ENCODE measurements at regions of chr3 and their contacts with region 1.

Region 1: GRCh38 chr3:194129581-194130133 is 6.3 kb upstream of the HES1 start:
- DNase-seq: peak in 1 of 5 donors; percentile 17
- ATAC-seq: no peak
- H3K4me3 ChIP-seq: no peak overlapping the region
- H3K27ac ChIP-seq: no peak overlapping the region
- H3K4me1 ChIP-seq: peaks cover 0 to 43% (median 27%) of the 10 kb centered on the region in 12 donors
- H3K27me3 ChIP-seq: peaks cover 0 to 45% (median 0%) of the 10 kb centered on the region in 9 donors
- CTCF ChIP-seq: no peak
- POLR2A ChIP-seq: no peak

Region 2: GRCh38 chr3:192980632-192981031 is 1149.0 kb before region 1 on chr3:
- intact Hi-C with region 1: no loop called
- DNase-seq: no peak
- ATAC-seq: no peak
- H3K4me3 ChIP-seq: no peak overlapping the region
- H3K27ac ChIP-seq: no peak overlapping the region
- H3K4me1 ChIP-seq: no peaks in the 10 kb centered on the region
- H3K27me3 ChIP-seq: peaks cover 0 to 3% (median 0%) of the 10 kb centered on the region in 9 donors
- CTCF ChIP-seq: no peak
- POLR2A ChIP-seq: no peak

Region 3: DNA sequence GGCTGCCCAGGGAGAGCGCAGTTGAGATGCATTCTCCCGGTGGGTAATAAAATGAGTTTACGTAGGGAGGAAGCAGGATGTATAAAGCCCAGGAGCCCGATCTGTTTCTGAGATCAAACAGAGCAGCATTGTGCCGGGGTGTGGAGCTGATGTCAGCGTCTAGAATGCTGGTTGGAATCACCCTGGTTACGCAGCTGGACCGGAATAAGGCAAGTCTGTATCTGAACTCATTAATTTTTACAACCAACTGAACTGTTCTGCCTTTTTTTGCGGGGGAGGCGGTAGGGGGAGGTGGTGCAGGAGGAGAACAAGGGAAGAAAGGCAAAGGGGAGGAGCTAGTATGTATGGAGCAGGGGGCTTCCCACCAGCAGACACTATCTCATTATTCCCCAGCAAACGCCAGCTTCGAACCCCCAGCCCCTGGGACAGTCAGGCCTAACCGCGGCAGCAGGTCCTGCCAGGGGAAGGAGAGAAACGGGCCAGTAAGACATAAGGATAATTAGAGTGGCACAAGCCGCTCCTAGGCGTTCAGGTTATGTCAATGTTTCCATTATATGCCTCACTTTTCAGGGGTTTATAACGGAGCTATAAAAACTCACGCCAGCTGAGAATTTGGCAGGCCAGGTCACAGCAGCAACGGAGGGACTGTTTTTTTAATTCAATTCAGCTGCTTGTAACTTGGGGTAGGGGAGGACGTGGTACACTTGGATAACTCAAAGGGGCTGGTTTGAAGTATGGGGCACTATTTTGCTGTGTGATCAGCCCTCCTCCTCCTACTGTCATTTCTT is 169.0 kb before region 1 on chr3:
- intact Hi-C with region 1: loop called in 1 of 10 experiments (anchors 10 kb)
- DNase-seq: peak in 2 of 5 donors; percentile 47 to 65
- ATAC-seq: peak in 3 of 4 donors; percentile 58 to 91 (median 85)
- H3K4me3 ChIP-seq: no peak overlapping the region
- H3K27ac ChIP-seq: no peak overlapping the region
- H3K4me1 ChIP-seq: peaks cover 0 to 12% (median 0%) of the 10 kb centered on the region in 12 donors
- H3K27me3 ChIP-seq: peaks cover 0 to 34% (median 4%) of the 10 kb centered on the region in 9 donors
- CTCF ChIP-seq: no peak
- POLR2A ChIP-seq: no peak

Region 4: GRCh38 chr3:194095464-194095863 is 34.2 kb before region 1 on chr3:
- intact Hi-C with region 1: no loop called
- DNase-seq: peak in 4 of 5 donors; percentile 58 to 75 (median 64)
- ATAC-seq: peak in 1 of 4 donors; percentile 26
- H3K4me3 ChIP-seq: no peak overlapping the region
- H3K27ac ChIP-seq: no peak overlapping the region
- H3K4me1 ChIP-seq: peaks cover 0 to 39% (median 24%) of the 10 kb centered on the region in 12 donors
- H3K27me3 ChIP-seq: peaks cover 0 to 8% (median 0%) of the 10 kb centered on the region in 9 donors
- CTCF ChIP-seq: no peak
- POLR2A ChIP-seq: no peak

Measured in heart left ventricle (tissue), 16 donors.